MCF 10A (cell line): ENCODE measurements at regions of chr1 and their contacts with region 1.

Region 1: GRCh38 chr1:165914136-165914798 is 86.9 kb downstream of the UCK2 start:
- DNase-seq: peak; percentile 88
- H3K4me3 Mint-ChIP-seq: no peak overlapping the region
- H3K27ac Mint-ChIP-seq: peak overlapping the region; percentile 37
- H3K4me1 Mint-ChIP-seq: peaks cover 22% of the 10 kb centered on the region
- H3K27me3 Mint-ChIP-seq: no peaks in the 10 kb centered on the region
- CTCF ChIP-seq: peak; percentile 96

Region 2: DNA sequence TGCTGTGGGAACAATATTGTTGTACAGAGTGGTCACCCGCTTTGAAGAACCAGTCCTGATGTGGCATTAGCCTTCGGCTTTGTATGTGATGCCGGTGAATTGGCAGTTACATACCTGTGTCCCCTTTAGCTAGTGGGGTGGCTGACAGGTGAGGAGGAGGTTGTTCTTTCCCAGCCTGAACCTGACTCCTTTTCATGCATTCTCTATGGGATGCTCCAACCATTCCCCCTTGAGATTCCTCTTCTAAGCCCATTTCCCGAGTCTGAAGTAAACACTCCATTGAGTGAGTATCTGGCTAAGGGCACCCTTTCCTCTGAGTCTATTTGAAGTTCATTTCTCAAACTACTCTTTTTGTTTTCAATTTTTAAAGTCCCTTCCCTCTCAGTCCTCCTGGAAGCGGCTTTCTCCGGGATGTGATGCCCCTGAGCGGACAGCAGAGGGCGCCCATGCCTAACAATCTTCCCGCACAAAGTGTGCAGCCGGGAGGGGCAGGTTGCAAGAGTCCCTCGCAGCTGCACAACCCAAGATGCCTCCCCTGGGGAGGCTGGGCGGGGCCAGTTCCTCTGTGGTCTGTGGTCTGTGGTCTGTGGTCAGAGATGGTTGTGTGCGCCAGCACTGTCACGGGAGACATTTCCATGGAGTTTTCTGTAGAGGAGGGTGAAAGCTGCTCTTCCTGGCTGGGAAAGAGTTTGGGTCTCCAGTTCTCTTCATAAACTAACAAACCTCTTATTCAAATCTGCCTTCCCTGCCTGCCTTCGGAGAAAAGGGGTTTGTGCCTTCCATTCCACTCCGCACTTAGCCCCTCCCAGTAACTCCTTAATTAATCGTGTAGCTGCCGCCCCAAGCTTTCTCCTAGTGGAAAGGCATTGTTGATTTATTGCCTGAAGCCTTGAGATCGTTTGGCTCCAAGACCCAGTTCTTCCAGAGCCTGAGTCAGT is 521.4 kb before region 1 on chr1:
- CTCF ChIA-PET with region 1: interaction called, 8 read pairs
- POLR2A ChIA-PET with region 1: no interaction called
- intact Hi-C with region 1: loop called (anchors 5 kb)
- DNase-seq: peak; percentile 88
- H3K4me3 Mint-ChIP-seq: peak overlapping the region; percentile 47
- H3K27ac Mint-ChIP-seq: no peak overlapping the region
- H3K4me1 Mint-ChIP-seq: peaks cover 18% of the 10 kb centered on the region
- H3K27me3 Mint-ChIP-seq: peaks cover 83% of the 10 kb centered on the region
- CTCF ChIP-seq: peak; percentile 98

Region 3: GRCh38 chr1:165712764-165713163 is 201.5 kb before region 1 on chr1:
- CTCF ChIA-PET with region 1: interaction called, 105 read pairs
- POLR2A ChIA-PET with region 1: interaction called, 3 read pairs
- intact Hi-C with region 1: no loop called
- DNase-seq: no peak
- H3K4me3 Mint-ChIP-seq: no peak overlapping the region
- H3K27ac Mint-ChIP-seq: no peak overlapping the region
- H3K4me1 Mint-ChIP-seq: no peaks in the 10 kb centered on the region
- H3K27me3 Mint-ChIP-seq: peaks cover 6% of the 10 kb centered on the region
- CTCF ChIP-seq: no peak

Region 4: DNA sequence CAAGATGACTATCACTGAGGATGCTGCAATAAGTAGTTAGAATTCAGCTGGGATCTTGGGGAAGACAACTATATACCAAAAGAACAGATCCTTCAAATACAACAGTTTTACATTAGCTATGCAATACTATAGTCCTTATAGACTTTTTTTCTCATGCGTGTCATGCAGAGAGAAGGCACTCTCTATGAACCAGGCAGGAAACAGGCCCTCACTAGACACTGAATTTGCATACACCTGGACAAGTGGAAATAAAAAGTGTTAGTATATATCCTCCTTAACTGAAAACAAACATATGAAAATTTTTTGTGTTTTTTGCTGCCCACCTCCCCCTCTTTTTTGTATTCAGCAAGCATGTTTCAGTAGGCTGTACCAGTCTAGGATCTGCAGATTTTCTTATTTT is 175.5 kb before region 1 on chr1:
- CTCF ChIA-PET with region 1: interaction called, 34 read pairs
- POLR2A ChIA-PET with region 1: no interaction called
- intact Hi-C with region 1: no loop called
- DNase-seq: no peak
- H3K4me3 Mint-ChIP-seq: no peak overlapping the region
- H3K27ac Mint-ChIP-seq: no peak overlapping the region
- H3K4me1 Mint-ChIP-seq: peaks cover 10% of the 10 kb centered on the region
- H3K27me3 Mint-ChIP-seq: no peaks in the 10 kb centered on the region
- CTCF ChIP-seq: no peak

Region 5: DNA sequence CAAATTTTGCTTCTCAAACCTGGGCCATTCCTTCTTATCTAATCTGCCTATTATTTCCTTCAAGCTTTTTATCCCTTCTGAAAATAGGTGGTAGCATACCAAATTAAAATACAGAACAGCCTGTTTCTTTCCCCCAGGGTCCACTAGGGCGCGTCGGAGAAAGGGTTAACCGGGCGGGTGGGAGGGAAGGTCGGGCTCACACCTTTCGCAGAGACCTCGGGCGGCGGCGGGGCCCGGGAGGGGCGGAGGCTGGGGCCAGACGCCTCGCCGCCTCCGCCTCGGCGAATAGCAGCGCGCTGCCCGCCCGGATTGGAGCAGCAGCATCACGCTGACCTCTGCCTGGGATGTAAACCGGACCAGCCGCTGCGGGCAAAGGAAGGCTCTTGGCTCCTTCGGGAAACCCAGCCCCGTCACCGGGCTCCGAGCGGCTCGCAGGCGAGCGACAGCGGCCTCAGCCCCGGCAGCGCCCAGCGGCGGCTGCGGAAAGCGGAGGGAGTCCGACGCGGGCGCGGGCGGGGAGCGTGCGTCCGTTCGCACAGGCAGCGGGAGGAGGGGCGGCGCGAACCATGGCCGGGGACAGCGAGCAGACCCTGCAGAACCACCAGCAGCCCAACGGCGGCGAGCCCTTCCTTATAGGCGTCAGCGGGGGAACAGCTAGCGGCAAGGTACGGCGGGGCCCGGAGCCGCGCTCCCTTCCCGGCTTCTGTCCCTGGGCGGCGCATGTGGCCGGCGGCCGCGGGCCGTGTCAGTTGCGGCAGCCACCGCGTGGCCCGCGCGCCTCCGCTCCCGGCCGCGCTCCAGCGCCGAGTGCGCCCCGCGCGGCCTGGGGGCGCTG is 86.8 kb before region 1 on chr1 and contains the start of gene UCK2:
- CTCF ChIA-PET with region 1: interaction called, 59 read pairs
- POLR2A ChIA-PET with region 1: interaction called, 22 read pairs
- intact Hi-C with region 1: loop called (anchors 1 kb)
- DNase-seq: peak; percentile 86
- H3K4me3 Mint-ChIP-seq: peak within 1 kb of the TSS; percentile 96
- H3K27ac Mint-ChIP-seq: peak within 1 kb of the TSS; percentile 90
- H3K4me1 Mint-ChIP-seq: peaks cover 25% of the 10 kb centered on the region
- H3K27me3 Mint-ChIP-seq: no peaks in the 10 kb centered on the region
- CTCF ChIP-seq: peak; percentile 6
- total RNA-seq, gene UCK2: 108 and 144 TPM in 2 replicates

Region 6: GRCh38 chr1:165898837-165899236 is 15.4 kb before region 1 on chr1:
- CTCF ChIA-PET with region 1: interaction called, 178 read pairs
- POLR2A ChIA-PET with region 1: interaction called, 10 read pairs
- intact Hi-C with region 1: no loop called
- DNase-seq: peak; percentile 73
- H3K4me3 Mint-ChIP-seq: peak overlapping the region; percentile 56
- H3K27ac Mint-ChIP-seq: peak overlapping the region; percentile 60
- H3K4me1 Mint-ChIP-seq: peaks cover 65% of the 10 kb centered on the region
- H3K27me3 Mint-ChIP-seq: no peaks in the 10 kb centered on the region
- CTCF ChIP-seq: no peak